Prostate gland (tissue), 2 donors: ENCODE measurements at regions of chr1 and their contacts with region 1.

Region 1: GRCh38 chr1:205485338-205486228 is 18.9 kb upstream of the CDK18 start:
- DNase-seq: peak; percentile 66
- H3K4me3 ChIP-seq: no peak overlapping the region
- H3K27ac ChIP-seq: no peak overlapping the region
- H3K4me1 ChIP-seq: no peaks in the 10 kb centered on the region
- H3K27me3 ChIP-seq: peaks cover 2% of the 10 kb centered on the region
- CTCF ChIP-seq: peak; percentile 88 to 93 (median 90)
- POLR2A ChIP-seq: no peak

Region 2: DNA sequence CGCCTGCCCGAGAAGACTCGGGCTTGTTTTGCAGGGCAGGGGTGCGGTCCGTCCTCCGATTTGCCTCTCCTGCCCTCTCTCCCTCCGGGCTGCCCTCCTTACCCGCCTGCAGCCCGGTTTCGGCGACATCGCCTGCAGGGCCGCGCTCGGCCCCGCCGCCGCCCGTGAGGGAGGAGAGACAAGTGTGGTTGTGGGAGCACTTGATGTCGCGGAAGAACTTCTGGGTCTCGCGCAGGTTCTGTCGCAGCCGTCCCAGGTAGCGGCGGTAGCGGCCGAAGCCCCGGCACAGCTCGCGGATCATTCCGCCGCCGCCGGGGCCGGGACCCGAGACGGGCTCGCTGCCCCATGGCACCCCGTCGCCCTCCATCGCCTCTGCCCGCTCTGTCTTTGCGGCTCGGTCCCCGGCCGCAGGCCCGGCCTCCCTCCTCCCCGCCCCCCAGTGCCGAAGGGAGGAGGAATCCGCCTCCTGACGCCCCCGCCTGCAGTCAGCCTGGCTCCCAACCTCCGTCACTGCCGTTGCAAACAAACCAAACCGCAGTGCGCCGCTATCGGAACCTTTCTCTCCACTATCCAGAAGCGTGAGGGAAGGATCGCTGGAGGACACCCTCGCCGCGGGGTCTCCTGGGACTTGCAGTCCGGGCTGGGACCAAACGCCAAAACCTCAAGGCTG is 274.3 kb before region 1 on chr1 and contains the start of gene DSTYK:
- intact Hi-C with region 1: no loop called
- DNase-seq: peak; percentile 92
- H3K4me3 ChIP-seq: peak within 1 kb of the TSS; percentile 88 to 97
- H3K27ac ChIP-seq: peak within 1 kb of the TSS; percentile 91 to 93
- H3K4me1 ChIP-seq: peaks cover 5% of the 10 kb centered on the region
- H3K27me3 ChIP-seq: no peaks in the 10 kb centered on the region
- CTCF ChIP-seq: peak in 1 of 4 experiments; percentile 11
- POLR2A ChIP-seq: peak; percentile 71
- total RNA-seq, gene DSTYK: 9.7 to 16.9 TPM

Region 3: DNA sequence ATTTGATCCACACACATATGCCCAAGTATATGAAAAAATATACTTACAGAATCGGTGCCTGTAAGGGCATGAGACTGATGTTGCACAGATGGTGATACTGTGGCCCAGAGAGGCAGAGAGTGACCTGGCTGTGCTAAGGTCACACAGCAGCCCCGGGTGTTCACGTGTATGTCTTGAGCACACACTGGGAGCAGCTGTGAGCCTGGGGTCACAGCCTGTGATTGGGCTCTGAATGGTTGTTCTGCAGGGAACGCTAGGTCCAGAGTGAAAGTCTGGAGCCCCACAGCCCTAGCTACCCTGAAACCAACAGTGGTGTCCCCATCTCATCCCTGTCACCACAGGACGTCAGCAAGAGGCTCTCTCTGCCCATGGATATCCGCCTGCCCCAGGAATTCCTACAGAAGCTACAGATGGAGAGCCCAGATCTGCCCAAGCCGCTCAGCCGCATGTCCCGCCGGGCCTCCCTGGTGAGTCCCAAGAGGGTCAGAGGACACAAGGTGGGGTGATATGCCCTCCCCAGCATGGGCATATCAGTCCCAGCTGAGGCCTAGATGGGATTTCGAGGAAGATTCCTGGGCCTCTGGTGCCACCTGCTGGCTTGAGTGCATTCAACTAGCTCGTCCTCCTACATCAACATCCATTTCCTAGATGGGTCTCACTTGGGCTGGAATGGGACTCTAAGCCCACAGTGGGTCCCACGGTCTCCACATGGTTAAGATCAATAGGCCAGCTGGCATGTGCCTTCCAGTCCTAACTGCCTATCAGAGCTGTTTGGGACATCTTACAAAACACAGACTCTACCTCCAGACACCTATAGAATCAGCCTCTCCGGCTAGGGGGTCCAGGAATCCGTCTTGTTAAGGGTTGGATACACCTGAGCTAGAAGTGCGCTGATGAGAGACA is 38.6 kb after region 1 on chr1:
- intact Hi-C with region 1: loop called (anchors 1 kb)
- DNase-seq: peak; percentile 74
- H3K4me3 ChIP-seq: no peak overlapping the region
- H3K27ac ChIP-seq: no peak overlapping the region
- H3K4me1 ChIP-seq: peaks cover 9% of the 10 kb centered on the region
- H3K27me3 ChIP-seq: no peaks in the 10 kb centered on the region
- CTCF ChIP-seq: peak; percentile 67 to 89 (median 83)
- POLR2A ChIP-seq: no peak

Region 4: GRCh38 chr1:205588636-205589035 is 103.1 kb after region 1 on chr1:
- intact Hi-C with region 1: no loop called
- DNase-seq: no peak
- H3K4me3 ChIP-seq: no peak overlapping the region
- H3K27ac ChIP-seq: no peak overlapping the region
- H3K4me1 ChIP-seq: no peaks in the 10 kb centered on the region
- H3K27me3 ChIP-seq: no peaks in the 10 kb centered on the region
- CTCF ChIP-seq: peak in 2 of 4 experiments; percentile 24 to 38
- POLR2A ChIP-seq: no peak